Pancreas (tissue), 10 donors: ENCODE measurements at regions of chr17 and their contacts with region 1.

Region 1: DNA sequence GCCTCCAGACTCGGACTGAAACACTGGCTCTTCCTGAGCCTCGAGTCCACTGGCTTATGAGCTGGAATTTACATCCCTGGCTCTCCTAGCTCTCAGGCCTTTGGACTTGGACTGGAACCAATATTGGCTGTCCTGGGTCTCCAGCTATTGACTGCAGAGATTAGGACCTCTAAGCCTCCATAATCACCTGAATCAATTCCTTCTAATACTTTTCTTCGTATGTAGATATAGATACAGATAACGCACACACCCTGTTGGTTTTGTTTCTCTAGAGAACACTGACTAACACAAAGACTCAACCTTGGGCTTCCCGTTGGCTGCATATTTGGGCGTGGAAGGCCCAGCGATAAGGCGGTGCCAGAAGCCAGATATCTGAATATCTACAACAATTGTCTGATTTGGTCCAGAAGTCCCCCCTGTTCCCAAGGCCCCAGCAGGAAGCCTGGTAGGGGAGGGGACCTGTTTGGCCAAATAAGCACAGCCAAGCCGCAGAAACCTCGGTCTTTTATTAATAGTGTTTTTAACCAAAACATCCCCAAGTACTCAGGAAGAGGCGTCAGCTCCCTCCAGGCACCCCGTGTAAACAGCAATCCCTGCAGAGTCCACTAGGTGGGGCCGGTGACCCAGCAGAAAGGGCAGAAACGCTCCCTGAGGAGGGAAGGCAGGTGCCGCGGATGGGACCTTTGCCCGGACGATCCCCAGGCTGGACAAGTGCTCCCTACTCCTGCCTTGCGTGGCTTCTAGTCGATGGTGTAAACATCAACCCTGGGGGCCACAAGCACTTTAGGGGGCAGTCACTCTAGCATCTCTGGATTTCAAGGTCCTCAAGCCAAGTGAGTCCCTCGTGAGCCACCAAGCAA is 57.0 kb downstream of the ABR start:
- DNase-seq: peak; percentile 73 to 95 (median 87)
- ATAC-seq: peak; percentile 83 to 97 (median 95)
- H3K4me3 ChIP-seq: no peak overlapping the region
- H3K27ac ChIP-seq: peak overlapping the region; percentile 14 to 59 (median 51)
- H3K4me1 ChIP-seq: peaks cover 0 to 9% (median 0%) of the 10 kb centered on the region in 3 donors
- H3K27me3 ChIP-seq: no peaks in the 10 kb centered on the region
- CTCF ChIP-seq: peak; percentile 71 to 91 (median 84)

Region 2: GRCh38 chr17:1179818-1180742 is 57.3 kb after region 1 on chr17 and contains the start of gene ABR:
- intact Hi-C with region 1: loop called in 2 of 3 experiments (anchors 5 kb)
- DNase-seq: peak in 5 of 6 donors; percentile 28 to 84 (median 74)
- ATAC-seq: peak; percentile 54 to 79 (median 72)
- H3K4me3 ChIP-seq: peak within 1 kb of the TSS; percentile 25 to 65 (median 50)
- H3K27ac ChIP-seq: no peak within 1 kb of the TSS
- H3K4me1 ChIP-seq: peaks cover 0 to 4% (median 0%) of the 10 kb centered on the region in 3 donors
- H3K27me3 ChIP-seq: no peaks in the 10 kb centered on the region
- CTCF ChIP-seq: no peak
- total RNA-seq, gene ABR: 15.4 to 57.4 (median 22.5) TPM

Region 3: DNA sequence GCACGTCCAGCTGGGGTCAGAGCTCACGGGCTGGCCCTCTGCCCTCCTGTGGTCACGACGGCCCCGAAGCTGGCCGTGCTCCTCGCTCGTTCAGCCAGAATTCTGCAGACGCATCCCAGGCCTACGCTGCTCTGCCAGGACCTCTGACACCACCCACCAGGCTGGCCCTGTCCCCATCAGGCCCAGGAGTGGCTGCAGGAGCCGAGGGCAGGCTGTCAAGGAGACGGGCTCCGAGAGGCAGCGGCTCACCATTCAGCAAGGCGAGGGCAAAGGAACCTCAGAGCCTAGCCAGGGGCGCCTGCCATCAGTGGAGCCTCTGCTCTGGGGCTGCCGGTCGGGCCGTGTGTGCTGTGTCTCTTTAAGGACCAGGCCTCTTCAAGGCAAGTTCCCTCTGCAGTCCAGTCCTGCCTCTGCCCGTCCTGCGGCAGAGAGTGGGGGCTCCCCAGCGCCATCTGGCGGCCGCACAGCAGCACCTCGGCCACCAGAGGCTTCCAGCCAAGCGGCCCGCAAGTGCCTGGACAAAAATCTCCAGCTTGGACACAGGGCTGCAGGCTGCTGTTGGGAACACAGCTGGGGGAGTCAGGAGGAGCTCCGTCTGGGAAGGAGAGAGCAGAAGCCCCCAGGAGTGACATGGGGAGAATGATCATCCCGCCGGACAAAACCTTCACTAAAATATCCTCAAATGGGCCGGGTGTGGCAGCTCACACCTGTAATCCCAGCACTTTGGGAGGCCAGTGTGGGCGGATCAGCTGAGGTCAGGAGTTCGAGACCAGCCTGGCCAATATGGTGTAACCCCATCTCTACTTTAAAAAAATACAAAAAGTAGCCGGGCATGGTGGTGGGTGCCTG is 64.4 kb after region 1 on chr17:
- intact Hi-C with region 1: loop called in 2 of 3 experiments (anchors 5 kb)
- DNase-seq: peak; percentile 78 to 94 (median 88)
- ATAC-seq: peak; percentile 88 to 96 (median 93)
- H3K4me3 ChIP-seq: no peak overlapping the region
- H3K27ac ChIP-seq: no peak overlapping the region
- H3K4me1 ChIP-seq: peaks cover 0 to 6% (median 5%) of the 10 kb centered on the region in 3 donors
- H3K27me3 ChIP-seq: no peaks in the 10 kb centered on the region
- CTCF ChIP-seq: peak; percentile 97 to 99 (median 98)